Posterior vena cava (tissue), 2 donors: ENCODE measurements at regions of chr7 and their contacts with region 1.

Region 1: DNA sequence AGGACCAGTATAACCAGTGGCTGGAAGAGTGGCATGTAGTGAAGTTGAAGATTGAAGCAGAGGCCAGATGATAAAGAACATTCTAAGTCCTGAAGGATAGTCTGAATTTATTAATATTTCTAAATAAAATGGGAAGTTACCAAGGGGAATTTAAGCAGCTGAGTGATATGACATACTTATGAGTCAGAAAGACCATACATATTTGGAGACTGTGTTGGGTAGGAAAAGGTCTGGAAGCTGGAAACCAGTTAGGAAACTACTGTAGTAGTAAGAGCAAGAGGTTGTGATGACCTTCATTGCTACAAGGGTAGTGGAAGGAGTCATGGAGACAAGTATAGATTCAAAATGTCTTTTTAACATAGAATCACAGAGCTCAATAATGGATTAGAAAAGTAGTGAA is 752.3 kb downstream of the SUGCT start:
- DNase-seq: no peak

Region 2: DNA sequence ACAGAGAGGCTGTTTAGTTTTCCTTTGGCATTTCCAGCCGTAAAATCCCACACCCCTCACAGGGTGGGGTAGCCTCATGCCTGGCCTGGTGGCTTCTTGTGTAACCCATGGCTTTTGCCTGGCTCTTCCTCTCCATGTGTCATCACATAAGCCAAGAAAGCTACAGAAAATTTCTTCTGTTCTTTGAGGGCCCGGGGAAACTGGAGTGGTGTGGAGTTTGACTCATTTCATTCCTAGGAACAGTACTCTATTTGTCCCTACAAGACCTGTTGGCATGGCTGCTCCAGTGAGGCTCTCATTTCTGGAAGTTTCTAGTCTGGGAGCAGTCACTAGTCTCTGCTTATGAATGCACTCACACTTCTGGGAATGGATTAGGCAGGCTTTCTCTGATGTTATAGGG is 228.4 kb before region 1 on chr7:
- intact Hi-C with region 1: no loop called
- DNase-seq: no peak

Region 3: GRCh38 chr7:40866604-40867003 is 20.5 kb before region 1 on chr7:
- intact Hi-C with region 1: loop called in 1 of 2 experiments (anchors 1 kb)
- DNase-seq: no peak

Region 4: DNA sequence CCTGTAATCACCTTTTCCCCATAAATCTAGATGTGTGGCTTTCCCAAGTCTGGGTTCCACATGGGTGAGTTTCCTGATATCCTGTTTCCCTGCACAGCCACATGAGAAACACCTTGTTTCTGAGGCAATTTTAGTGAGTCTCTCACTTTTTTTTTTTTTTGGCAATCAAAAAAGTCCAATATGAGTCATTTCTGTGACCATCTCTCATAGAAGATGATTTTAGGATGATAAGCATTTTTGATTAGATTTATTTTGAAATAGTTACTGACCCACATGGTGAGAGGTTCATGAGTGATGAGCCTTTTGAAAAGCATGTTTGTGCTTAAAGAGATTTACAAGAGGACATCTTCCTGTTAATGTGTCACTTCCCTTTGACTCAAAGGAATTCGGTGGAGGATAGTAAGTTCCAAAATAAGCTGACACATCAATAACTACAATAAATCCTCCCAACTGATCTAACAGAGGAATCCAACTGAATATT is 351.8 kb after region 1 on chr7:
- intact Hi-C with region 1: no loop called
- DNase-seq: no peak